ENCODE measurements at regions of chr12 and their contacts with region 1.

Region 1: GRCh38 chr12:68290126-68290525 is 36.7 kb upstream of the IL22 start:
- DNase-seq: peak; percentile 58
- H3K4me3 Mint-ChIP-seq: peak overlapping the region; percentile 6
- H3K27ac Mint-ChIP-seq: peak overlapping the region; percentile 65
- H3K4me1 Mint-ChIP-seq: peaks cover 50% of the 10 kb centered on the region
- H3K27me3 Mint-ChIP-seq: peaks cover 9% of the 10 kb centered on the region

Region 2: GRCh38 chr12:68279227-68280054 is 10.7 kb before region 1 on chr12:
- CTCF ChIA-PET with region 1: interaction called, 4 read pairs
- POLR2A ChIA-PET with region 1: interaction called, 26 read pairs
- DNase-seq: no peak
- H3K4me3 Mint-ChIP-seq: no peak overlapping the region
- H3K27ac Mint-ChIP-seq: peak overlapping the region; percentile 28
- H3K4me1 Mint-ChIP-seq: peaks cover 58% of the 10 kb centered on the region
- H3K27me3 Mint-ChIP-seq: peaks cover 6% of the 10 kb centered on the region

Region 3: GRCh38 chr12:68317047-68317667 is 27.0 kb after region 1 on chr12:
- CTCF ChIA-PET with region 1: interaction called, 10 read pairs
- POLR2A ChIA-PET with region 1: interaction called, 6 read pairs
- DNase-seq: peak; percentile 46
- H3K4me3 Mint-ChIP-seq: no peak overlapping the region
- H3K27ac Mint-ChIP-seq: no peak overlapping the region
- H3K4me1 Mint-ChIP-seq: peaks cover 5% of the 10 kb centered on the region
- H3K27me3 Mint-ChIP-seq: no peaks in the 10 kb centered on the region

Measured in activated CD4-positive, alpha-beta memory T cell treated with anti-CD3 and anti-CD28 coated beads, Interleukin-2, amount 10 ng/mL, durations not matched to agents 7 days and 5 days (primary cell).